GM12878 (cell line): ENCODE measurements at regions of chr9 and their contacts with region 1.

Region 1: DNA sequence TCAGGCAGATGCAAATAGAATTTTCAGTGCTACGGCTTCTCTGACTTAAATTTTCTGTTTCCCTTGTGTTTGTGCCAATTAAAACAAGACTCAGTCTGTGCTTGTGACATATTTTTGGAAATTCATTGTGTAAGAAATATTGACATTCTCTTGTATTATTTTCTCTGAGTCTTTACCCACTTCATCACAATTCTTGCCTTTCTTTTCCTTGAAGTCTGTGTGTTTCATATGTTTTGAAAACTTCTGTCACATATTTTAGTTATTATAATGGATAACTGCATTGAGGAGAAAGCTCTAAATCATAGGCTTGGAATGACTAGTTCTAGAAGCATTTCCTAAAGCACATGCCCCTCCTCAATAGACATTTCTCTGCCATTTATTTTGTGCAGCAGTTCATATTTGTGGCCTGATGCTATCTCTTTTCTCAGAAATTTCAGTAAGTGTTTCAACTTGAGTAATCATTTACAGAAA is 206.6 kb downstream of the PALM2AKAP2 start:
- DNase-seq: no peak
- ATAC-seq: no peak
- H3K4me3 ChIP-seq: no peak overlapping the region
- H3K27ac ChIP-seq: no peak overlapping the region
- H3K4me1 ChIP-seq: peaks cover under 1% of the 10 kb centered on the region; the same call in 1 of the 2 replicates
- H3K27me3 ChIP-seq: no peaks in the 10 kb centered on the region
- CTCF ChIP-seq: no peak
- EP300 ChIP-seq: no peak
- POLR2A ChIP-seq: no peak
- RAD21 ChIP-seq: no peak

Region 2: GRCh38 chr9:109705515-109705914 is 281.0 kb before region 1 on chr9:
- CTCF ChIA-PET with region 1: no interaction called
- POLR2A ChIA-PET with region 1: no interaction called
- RAD21 ChIA-PET with region 1: no interaction called
- SMC1A ChIA-PET with region 1: no interaction called
- in situ Hi-C with region 1: no loop called
- intact Hi-C with region 1: no loop called
- DNase-seq: no peak
- ATAC-seq: no peak
- H3K4me3 ChIP-seq: no peak overlapping the region
- H3K27ac ChIP-seq: no peak overlapping the region
- H3K4me1 ChIP-seq: no peaks in the 10 kb centered on the region
- H3K27me3 ChIP-seq: no peaks in the 10 kb centered on the region
- CTCF ChIP-seq: no peak
- EP300 ChIP-seq: no peak
- POLR2A ChIP-seq: no peak
- RAD21 ChIP-seq: no peak

Region 3: GRCh38 chr9:110161940-110162339 is 175.4 kb after region 1 on chr9:
- CTCF ChIA-PET with region 1: no interaction called
- POLR2A ChIA-PET with region 1: interaction called, 10 read pairs
- RAD21 ChIA-PET with region 1: no interaction called
- SMC1A ChIA-PET with region 1: no interaction called
- in situ Hi-C with region 1: no loop called
- intact Hi-C with region 1: no loop called
- DNase-seq: no peak
- ATAC-seq: peak; percentile 59
- H3K4me3 ChIP-seq: no peak overlapping the region
- H3K27ac ChIP-seq: no peak overlapping the region; the same call in 1 of the 2 replicates
- H3K4me1 ChIP-seq: peaks cover 39% of the 10 kb centered on the region
- H3K27me3 ChIP-seq: no peaks in the 10 kb centered on the region
- CTCF ChIP-seq: no peak
- EP300 ChIP-seq: 0 out of 4 replicates have a peak, but pooled peaks of 1 of the 2 experiments have one; percentile 12
- POLR2A ChIP-seq: no peak
- RAD21 ChIP-seq: no peak

Region 4: GRCh38 chr9:110669438-110669837 is 682.9 kb after region 1 on chr9:
- CTCF ChIA-PET with region 1: no interaction called
- POLR2A ChIA-PET with region 1: no interaction called
- RAD21 ChIA-PET with region 1: no interaction called
- SMC1A ChIA-PET with region 1: no interaction called
- in situ Hi-C with region 1: no loop called
- intact Hi-C with region 1: no loop called
- DNase-seq: no peak
- ATAC-seq: no peak
- H3K4me3 ChIP-seq: no peak overlapping the region
- H3K27ac ChIP-seq: no peak overlapping the region
- H3K4me1 ChIP-seq: no peaks in the 10 kb centered on the region
- H3K27me3 ChIP-seq: no peaks in the 10 kb centered on the region
- CTCF ChIP-seq: no peak
- EP300 ChIP-seq: no peak
- POLR2A ChIP-seq: no peak
- RAD21 ChIP-seq: no peak